ENCODE measurements at regions of chr3 and their contacts with region 1.

Region 1: DNA sequence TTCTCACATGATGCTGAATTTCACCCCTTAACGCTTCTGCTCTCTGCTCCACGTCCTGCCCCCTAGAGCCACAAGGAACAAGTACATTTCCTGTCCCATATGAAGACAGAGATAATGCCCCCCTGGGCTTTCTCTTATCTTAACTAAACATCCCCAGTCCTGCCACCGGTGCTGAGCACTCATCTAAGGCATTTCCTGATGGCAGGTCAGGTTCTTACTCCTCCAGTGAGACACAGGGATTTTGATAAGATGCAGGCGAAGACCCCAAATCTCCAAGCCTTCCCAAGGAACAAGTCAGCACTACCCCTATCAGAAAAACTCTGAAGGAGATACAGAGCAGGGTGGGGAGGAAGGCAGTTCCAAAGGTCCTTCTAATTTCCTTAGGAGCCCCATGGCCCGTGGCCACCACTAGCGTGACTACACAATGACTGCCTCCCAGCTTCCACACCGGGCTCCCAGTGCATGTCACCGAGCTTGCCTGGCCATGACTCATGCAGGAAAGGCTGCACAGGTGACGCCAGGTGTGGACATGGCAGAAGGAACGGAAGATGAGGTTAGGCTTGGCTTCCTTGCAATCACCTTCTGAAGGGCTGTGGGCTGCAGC is 152.9 kb downstream of the XXYLT1 start:
- DNase-seq: peak; percentile 80
- H3K4me3 ChIP-seq: no peak overlapping the region
- H3K27ac ChIP-seq: peak overlapping the region; percentile 87
- H3K4me1 ChIP-seq: peaks cover 49% of the 10 kb centered on the region
- H3K27me3 ChIP-seq: no peaks in the 10 kb centered on the region
- CTCF ChIP-seq: peak; percentile 51 to 58
- POLR2A ChIP-seq: peak; percentile 65

Region 2: GRCh38 chr3:194691481-194692283 is 426.4 kb before region 1 on chr3:
- CTCF ChIA-PET with region 1: interaction called, 4 read pairs
- POLR2A ChIA-PET with region 1: interaction called, 27 read pairs
- dilution Hi-C with region 1: loop called (anchors 25 kb)
- intact Hi-C with region 1: no loop called
- DNase-seq: peak; percentile 68
- H3K4me3 ChIP-seq: no peak overlapping the region
- H3K27ac ChIP-seq: peak overlapping the region; percentile 39
- H3K4me1 ChIP-seq: peaks cover 19% of the 10 kb centered on the region
- H3K27me3 ChIP-seq: no peaks in the 10 kb centered on the region
- CTCF ChIP-seq: no peak
- POLR2A ChIP-seq: peak; percentile 76

Region 3: DNA sequence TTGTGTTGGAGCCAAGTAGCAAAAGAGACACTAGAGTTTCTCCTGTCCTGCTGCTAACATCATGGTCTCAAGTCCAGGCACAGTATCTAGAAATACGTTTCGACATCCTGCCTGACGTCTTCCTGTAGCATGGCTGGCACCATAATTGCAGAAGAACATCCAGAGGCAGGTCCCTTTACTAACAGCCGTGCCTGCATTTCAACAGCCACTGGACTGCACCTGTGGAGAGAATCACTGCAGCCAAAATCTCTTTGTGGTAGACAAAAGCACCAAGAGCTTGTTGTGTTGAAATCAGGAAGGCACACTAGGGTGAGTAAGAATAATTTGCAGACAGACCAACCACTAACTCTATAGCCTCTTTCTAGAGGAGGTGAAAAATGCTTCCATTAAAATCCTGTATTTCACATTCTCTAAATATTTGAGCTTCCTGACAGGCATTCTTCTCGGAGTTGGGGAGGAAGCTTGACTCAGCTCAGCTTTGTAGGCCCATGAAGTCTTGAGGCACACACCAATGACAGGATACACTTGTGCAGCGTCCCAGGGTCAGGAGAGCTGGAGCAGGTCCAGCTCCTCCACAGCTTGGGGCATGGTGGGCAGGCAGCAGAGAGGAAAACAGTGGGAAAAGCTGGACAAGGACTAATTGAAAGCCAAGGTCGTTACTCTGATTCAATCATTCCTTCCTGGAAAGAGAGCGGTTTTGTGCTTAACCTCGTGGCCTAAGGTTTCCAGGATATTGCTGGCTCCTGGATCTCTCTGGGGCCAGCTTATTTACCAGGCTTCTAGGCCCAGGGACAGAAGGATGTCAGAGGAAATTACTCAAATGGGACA is 187.5 kb before region 1 on chr3:
- CTCF ChIA-PET with region 1: interaction called, 7 read pairs
- POLR2A ChIA-PET with region 1: interaction called, 6 read pairs
- dilution Hi-C with region 1: no loop called
- intact Hi-C with region 1: loop called (anchors 1 kb)
- DNase-seq: peak; percentile 99
- H3K4me3 ChIP-seq: no peak overlapping the region
- H3K27ac ChIP-seq: peak overlapping the region; percentile 98
- H3K4me1 ChIP-seq: peaks cover 47% of the 10 kb centered on the region
- H3K27me3 ChIP-seq: no peaks in the 10 kb centered on the region
- CTCF ChIP-seq: no peak
- POLR2A ChIP-seq: peak; percentile 41

Region 4: GRCh38 chr3:195140816-195141793 is 23.0 kb after region 1 on chr3:
- CTCF ChIA-PET with region 1: interaction called, 4 read pairs
- POLR2A ChIA-PET with region 1: interaction called, 3 read pairs
- dilution Hi-C with region 1: no loop called
- intact Hi-C with region 1: loop called (anchors 1 kb)
- DNase-seq: peak; percentile 92
- H3K4me3 ChIP-seq: no peak overlapping the region
- H3K27ac ChIP-seq: peak overlapping the region; percentile 92
- H3K4me1 ChIP-seq: peaks cover 27% of the 10 kb centered on the region
- H3K27me3 ChIP-seq: no peaks in the 10 kb centered on the region
- CTCF ChIP-seq: no peak
- POLR2A ChIP-seq: peak; percentile 67

Region 5: GRCh38 chr3:195182470-195182795 is 64.4 kb after region 1 on chr3:
- CTCF ChIA-PET with region 1: no interaction called
- POLR2A ChIA-PET with region 1: no interaction called
- dilution Hi-C with region 1: no loop called
- intact Hi-C with region 1: loop called (anchors 2 kb)
- DNase-seq: peak; percentile 96
- H3K4me3 ChIP-seq: no peak overlapping the region
- H3K27ac ChIP-seq: peak overlapping the region; percentile 93
- H3K4me1 ChIP-seq: peaks cover 65% of the 10 kb centered on the region
- H3K27me3 ChIP-seq: no peaks in the 10 kb centered on the region
- CTCF ChIP-seq: no peak
- POLR2A ChIP-seq: no peak

Region 6: GRCh38 chr3:195442573-195443390 is 324.7 kb after region 1 on chr3 and contains the start of gene ACAP2:
- CTCF ChIA-PET with region 1: no interaction called
- POLR2A ChIA-PET with region 1: no interaction called
- dilution Hi-C with region 1: no loop called
- intact Hi-C with region 1: loop called (anchors 2 kb)
- DNase-seq: peak; percentile 100
- H3K4me3 ChIP-seq: peak within 1 kb of the TSS; percentile 70 to 88 (median 81)
- H3K27ac ChIP-seq: peak within 1 kb of the TSS; percentile 63
- H3K4me1 ChIP-seq: peaks cover 15% of the 10 kb centered on the region
- H3K27me3 ChIP-seq: no peaks in the 10 kb centered on the region
- CTCF ChIP-seq: no peak
- POLR2A ChIP-seq: peak; percentile 93
- total RNA-seq, gene ACAP2: 34.4 and 36.9 TPM in 2 replicates